ENCODE measurements at regions of chr5 and their contacts with region 1.

Region 1: GRCh38 chr5:133868946-133869518 is 99.4 kb downstream of the C5orf15 start:
- DNase-seq: peak in 1 of 2 donors; percentile 82
- H3K4me3 ChIP-seq: peak overlapping the region; percentile 21 to 43
- H3K27ac ChIP-seq: no peak overlapping the region
- H3K4me1 ChIP-seq: no peaks in the 10 kb centered on the region
- H3K27me3 ChIP-seq: no peaks in the 10 kb centered on the region
- CTCF ChIP-seq: peak; percentile 54 to 92 (median 76)

Region 2: GRCh38 chr5:133423618-133424282 is 445.3 kb before region 1 on chr5:
- intact Hi-C with region 1: loop called (anchors 1 kb)
- DNase-seq: no peak
- H3K4me3 ChIP-seq: no peak overlapping the region
- H3K27ac ChIP-seq: no peak overlapping the region
- H3K4me1 ChIP-seq: no peaks in the 10 kb centered on the region
- H3K27me3 ChIP-seq: no peaks in the 10 kb centered on the region
- CTCF ChIP-seq: peak; percentile 59 to 82 (median 78)

Region 3: GRCh38 chr5:133552931-133553525 is 316.0 kb before region 1 on chr5:
- intact Hi-C with region 1: loop called (anchors 5 kb)
- DNase-seq: no peak
- H3K4me3 ChIP-seq: no peak overlapping the region
- H3K27ac ChIP-seq: no peak overlapping the region
- H3K4me1 ChIP-seq: no peaks in the 10 kb centered on the region
- H3K27me3 ChIP-seq: no peaks in the 10 kb centered on the region
- CTCF ChIP-seq: peak; percentile 30 to 58 (median 46)

Region 4: GRCh38 chr5:133688391-133688790 is 180.6 kb before region 1 on chr5:
- intact Hi-C with region 1: no loop called
- DNase-seq: no peak
- H3K4me3 ChIP-seq: no peak overlapping the region
- H3K27ac ChIP-seq: no peak overlapping the region
- H3K4me1 ChIP-seq: peaks cover 0 to 7% of the 10 kb centered on the region in 2 donors
- H3K27me3 ChIP-seq: no peaks in the 10 kb centered on the region
- CTCF ChIP-seq: no peak

Measured in ascending aorta (tissue), 2 donors.